ENCODE measurements at regions of chr1 and their contacts with region 1.

Region 1: GRCh38 chr1:17075470-17076255 is 21.8 kb upstream of the SDHB start:
- H3K4me3 ChIP-seq: no peak overlapping the region
- H3K27ac ChIP-seq: no peak overlapping the region
- H3K4me1 ChIP-seq: no peaks in the 10 kb centered on the region
- CTCF ChIP-seq: 0 out of 2 replicates have a peak, but pooled peaks have one; percentile 16

Region 2: DNA sequence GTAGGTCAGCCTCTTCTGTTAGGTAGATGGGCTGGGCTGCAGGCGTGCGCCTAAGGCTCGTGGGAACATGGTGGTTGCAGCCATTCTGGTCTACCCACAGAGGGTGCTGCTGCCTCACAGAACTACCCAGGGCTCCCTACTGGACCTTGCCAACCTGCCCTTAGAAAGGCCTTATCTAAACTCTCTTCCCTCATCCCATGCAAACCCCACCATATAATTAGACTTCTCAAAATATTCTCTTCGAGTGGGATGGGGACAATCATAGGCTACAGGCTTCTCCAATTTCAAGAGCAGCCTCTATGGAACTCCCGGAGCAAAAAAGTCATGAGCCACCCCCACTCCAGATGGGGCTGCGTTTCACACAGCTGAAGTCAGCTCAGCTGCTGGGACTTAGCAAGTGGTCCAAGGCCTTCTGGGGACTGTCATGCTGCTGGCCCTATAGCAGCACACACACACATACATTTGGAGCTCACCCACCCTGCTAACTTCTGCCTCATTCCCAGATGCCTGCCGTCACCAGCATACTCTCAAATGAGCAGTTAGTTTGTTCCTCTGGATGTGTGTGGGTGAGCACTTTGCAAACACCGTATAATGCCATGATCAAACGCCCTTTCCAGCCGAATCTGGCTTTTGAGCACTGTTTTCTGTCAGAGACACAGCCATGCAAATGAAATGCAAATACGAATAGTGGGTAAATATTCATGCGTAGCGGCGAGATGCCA is 15.8 kb before region 1 on chr1:
- CTCF ChIA-PET with region 1: interaction called, 17 read pairs
- POLR2A ChIA-PET with region 1: no interaction called
- H3K4me3 ChIP-seq: no peak overlapping the region
- H3K27ac ChIP-seq: no peak overlapping the region
- H3K4me1 ChIP-seq: no peaks in the 10 kb centered on the region
- CTCF ChIP-seq: peak; percentile 85

Region 3: DNA sequence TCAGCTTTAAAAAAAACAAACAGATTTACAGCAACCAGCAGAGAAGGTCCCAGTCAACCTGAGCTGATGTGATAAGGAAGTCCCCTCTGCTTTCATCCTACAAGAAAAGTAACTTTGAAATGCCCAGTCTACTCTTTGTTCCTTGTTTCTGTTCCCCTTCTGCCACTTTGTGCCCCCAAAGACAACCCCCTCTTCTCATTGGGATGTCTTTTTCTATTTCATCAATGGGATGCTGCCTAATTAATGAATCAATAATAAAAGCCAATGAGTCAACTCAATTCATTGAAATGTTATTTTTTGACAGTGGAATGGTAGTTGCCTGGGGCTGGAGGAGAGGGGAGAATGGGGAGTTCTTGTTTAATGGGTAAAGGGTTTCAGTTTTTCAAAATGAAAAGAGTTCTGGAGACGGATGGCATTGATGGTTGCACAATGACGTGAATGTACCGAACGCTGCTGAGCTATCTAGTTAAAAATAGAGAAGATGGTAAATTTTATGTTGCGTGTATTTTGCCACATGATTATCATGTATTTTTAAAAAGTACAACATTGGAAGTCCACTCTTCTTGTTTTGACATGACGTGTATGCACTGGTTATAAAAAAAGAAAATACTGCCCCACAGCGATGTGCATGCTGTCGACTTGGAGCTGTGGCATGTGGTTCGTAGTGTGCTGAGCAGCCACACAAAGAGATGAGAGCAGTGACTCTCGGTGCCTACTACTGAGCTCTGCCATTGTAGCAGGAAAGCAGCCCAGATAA is 66.0 kb after region 1 on chr1:
- CTCF ChIA-PET with region 1: no interaction called
- POLR2A ChIA-PET with region 1: no interaction called
- H3K4me3 ChIP-seq: no peak overlapping the region
- H3K27ac ChIP-seq: no peak overlapping the region
- H3K4me1 ChIP-seq: no peaks in the 10 kb centered on the region
- CTCF ChIP-seq: no peak

Measured in HEK293 (cell line).